Dorsolateral prefrontal cortex (tissue), 120 donors: ENCODE measurements at regions of chr15 and their contacts with region 1.

Region 1: DNA sequence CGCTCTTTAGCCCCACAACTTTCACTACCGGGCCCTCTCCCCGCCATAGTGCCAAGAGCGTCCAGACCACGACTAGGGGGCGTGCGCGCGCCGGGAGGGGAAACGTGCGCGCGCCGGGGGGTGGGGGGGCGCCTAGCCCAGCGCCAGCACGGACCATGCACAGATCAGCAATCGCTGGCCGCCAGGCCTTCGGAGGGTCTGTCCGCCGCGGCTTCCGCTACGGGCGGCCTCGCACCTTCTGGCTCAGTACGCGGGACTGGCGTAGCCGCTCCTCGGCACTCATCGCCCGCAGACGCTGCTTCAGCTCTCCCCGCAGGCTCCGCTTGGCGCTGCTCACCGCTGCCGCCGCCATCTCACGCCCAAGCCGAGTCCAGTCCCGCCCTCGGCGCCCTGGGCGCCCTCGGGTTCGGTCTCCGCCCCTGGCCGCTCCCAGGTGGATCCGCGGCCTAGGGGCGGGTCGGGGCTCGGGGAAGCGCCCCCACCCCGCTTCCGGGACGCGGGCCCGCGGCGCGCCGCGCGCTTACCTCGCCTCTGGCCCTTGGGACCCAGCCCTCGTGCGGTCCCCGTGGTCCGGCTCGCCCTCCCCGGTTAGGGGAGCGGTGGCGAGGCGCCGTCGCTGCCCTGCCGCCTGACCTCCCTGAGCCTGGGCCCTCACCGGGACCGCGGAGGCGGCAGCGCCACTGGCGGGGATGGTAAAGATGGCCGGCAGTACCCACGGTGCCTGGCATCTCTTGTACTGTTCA is at the start of gene MTHFS:
- DNase-seq: peak in 9 of 10 donors; percentile 36 to 76 (median 52)
- H3K4me3 ChIP-seq: peak within 1 kb of the TSS; percentile 58 to 100 (median 86)
- H3K27ac ChIP-seq: peak within 1 kb of the TSS; percentile 76 to 99 (median 97)
- H3K27me3 ChIP-seq: no peaks in the 10 kb centered on the region
- CTCF ChIP-seq: peak in 54 of 56 donors; percentile 25 to 79 (median 54)
- total RNA-seq, gene MTHFS: 2.6 to 23.9 (median 13.1) TPM

Region 2: GRCh38 chr15:79923515-79924395 is 26.9 kb after region 1 on chr15:
- intact Hi-C with region 1: loop called in 1 of 2 experiments (anchors 2 kb)
- DNase-seq: peak; percentile 53 to 92 (median 77)
- H3K4me3 ChIP-seq: peak overlapping the region; percentile 66 to 96 (median 86)
- H3K27ac ChIP-seq: peak overlapping the region; percentile 6 to 97 (median 87)
- H3K27me3 ChIP-seq: no peaks in the 10 kb centered on the region
- CTCF ChIP-seq: peak in 9 of 56 donors; percentile 6 to 26 (median 17)

Region 3: DNA sequence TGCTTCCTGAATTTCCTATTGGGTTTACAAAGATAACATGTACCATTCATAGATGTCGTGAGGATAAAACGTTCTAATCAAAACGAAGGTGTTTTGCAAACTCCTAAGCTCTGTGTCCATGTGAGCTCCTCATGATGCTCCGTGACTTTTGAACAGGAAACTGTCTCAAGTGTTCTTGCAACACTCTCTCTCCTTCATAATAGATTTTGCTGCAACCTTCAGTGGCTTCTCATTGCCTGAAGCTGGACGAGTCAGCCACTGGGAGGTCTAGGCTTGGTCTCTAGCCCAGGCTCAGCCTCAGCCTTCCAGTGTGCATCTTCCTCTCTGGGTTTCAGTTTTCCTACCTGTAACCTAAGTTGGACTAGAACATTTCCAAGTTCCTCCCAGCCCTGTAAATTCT is 92.9 kb after region 1 on chr15:
- intact Hi-C with region 1: loop called in 1 of 2 experiments (anchors 5 kb)
- DNase-seq: no peak
- H3K4me3 ChIP-seq: no peak overlapping the region
- H3K27ac ChIP-seq: no peak overlapping the region
- H3K27me3 ChIP-seq: peaks cover 0 to 6% (median 0%) of the 10 kb centered on the region in 45 donors
- CTCF ChIP-seq: no peak

Region 4: DNA sequence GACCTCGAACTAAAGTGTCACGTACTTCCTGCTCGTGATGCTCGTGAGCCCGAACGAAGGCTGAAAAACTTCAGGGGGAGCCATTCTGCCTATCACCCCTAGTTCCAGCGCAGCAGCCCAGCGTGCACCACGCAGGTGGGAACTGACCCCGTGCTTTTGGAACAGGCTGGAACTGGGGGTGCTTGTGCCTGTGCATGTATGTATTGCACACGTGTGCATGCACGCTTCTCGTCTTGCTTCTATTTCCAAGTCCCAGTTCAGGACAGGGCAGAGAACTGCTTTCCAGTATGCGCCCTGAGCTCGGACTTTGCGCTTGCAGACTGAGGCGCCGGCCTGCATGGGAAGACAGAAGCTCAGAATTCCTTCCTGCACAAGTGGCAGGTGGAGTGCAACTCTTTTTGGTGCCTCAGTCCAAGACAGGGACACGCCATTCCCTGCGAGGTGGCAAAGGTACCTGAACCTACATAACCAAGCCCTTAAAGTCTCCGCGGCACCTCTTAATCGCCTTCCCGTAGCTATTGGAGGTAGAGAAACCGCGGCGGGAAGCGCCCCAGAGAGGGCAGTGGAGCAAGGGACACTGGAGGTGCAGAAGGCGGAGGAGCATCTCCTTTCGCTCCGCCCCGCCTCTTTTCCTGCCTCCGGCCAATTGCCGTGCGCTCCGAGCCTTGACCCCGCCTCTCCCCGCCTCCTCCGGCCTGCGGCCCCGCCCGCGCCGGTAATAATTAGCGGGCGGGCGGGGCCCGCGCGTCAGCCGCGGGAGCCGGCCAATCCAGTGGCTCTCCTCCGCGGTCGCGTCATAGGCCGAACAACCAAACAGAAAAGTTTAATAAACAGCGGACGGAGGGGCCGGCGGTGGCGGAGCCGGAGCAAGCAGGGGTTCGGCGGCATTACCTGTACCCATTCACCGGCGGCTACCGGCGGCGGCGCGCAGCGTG is 162.3 kb after region 1 on chr15 and contains the start of gene ZFAND6:
- intact Hi-C with region 1: loop called in 1 of 2 experiments (anchors 5 kb)
- DNase-seq: peak; percentile 89 to 98 (median 95)
- H3K4me3 ChIP-seq: peak within 1 kb of the TSS; percentile 66 to 96 (median 84)
- H3K27ac ChIP-seq: peak within 1 kb of the TSS in 58 of 59 donors; percentile 47 to 98 (median 90)
- H3K27me3 ChIP-seq: no peaks in the 10 kb centered on the region
- CTCF ChIP-seq: peak in 26 of 56 donors; percentile 2 to 50 (median 18)
- total RNA-seq, gene ZFAND6: 31.3 to 64.3 (median 45.0) TPM